Adrenal gland (tissue), 19 donors: ENCODE measurements at regions of chr5 and their contacts with region 1.

Region 1: DNA sequence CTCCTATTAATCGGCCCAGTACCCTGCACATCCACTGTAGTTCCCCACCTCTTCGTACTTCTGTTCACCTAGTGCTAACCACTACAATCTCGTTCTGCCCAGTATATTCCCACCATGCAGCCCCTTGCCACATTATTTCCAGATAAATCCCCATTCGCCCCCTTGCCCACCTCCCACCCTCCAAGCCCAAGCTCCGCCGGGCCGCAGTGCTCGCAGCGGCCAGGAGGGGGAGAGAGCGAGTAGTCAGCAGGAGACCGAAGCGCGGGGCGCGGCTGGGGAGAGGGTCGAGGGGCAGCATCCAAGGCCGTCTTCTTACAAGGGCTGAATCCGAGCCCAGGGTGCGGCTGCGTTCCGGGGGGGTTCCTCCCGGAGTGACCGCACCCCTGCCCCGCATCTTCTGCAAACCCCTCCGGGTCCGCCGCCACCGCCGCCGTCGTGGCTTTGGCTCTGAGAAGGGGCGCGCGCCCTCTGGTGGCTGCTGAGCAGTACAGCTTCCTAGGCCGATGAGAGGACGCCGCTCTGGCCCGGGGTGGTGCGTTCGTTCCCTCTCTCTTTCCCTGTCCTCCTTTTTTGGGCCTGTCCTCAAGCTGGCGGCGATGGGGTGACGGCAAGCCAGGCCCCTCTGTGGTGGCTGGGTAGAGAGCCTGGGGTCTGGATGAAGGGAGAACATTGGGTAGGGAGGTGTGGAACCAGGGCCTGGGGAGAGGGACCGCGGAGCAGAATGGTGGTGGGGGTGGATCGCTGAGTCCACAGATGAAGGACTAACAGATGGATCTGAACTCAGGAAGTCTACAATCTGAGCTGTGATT is 30.0 kb upstream of the PSD2 start:
- DNase-seq: peak; percentile 64 to 82 (median 77)
- H3K4me3 ChIP-seq: peak overlapping the region in 2 of 4 donors; percentile 30 to 60
- H3K27ac ChIP-seq: no peak overlapping the region
- H3K4me1 ChIP-seq: peaks cover 0 to 4% of the 10 kb centered on the region in 2 donors
- H3K27me3 ChIP-seq: peaks cover 8% of the 10 kb centered on the region
- CTCF ChIP-seq: peak; percentile 91 to 100 (median 98)
- POLR2A ChIP-seq: peak in 1 of 2 donors; percentile 11

Region 2: GRCh38 chr5:139422307-139422893 is 343.2 kb before region 1 on chr5:
- intact Hi-C with region 1: loop called (anchors 5 to 10 kb)
- DNase-seq: peak in 6 of 7 donors; percentile 51 to 72 (median 59)
- H3K4me3 ChIP-seq: no peak overlapping the region
- H3K27ac ChIP-seq: no peak overlapping the region
- H3K4me1 ChIP-seq: peaks cover 0 to 5% of the 10 kb centered on the region in 2 donors
- H3K27me3 ChIP-seq: no peaks in the 10 kb centered on the region
- CTCF ChIP-seq: peak; percentile 47 to 91 (median 78)
- POLR2A ChIP-seq: no peak

Region 3: DNA sequence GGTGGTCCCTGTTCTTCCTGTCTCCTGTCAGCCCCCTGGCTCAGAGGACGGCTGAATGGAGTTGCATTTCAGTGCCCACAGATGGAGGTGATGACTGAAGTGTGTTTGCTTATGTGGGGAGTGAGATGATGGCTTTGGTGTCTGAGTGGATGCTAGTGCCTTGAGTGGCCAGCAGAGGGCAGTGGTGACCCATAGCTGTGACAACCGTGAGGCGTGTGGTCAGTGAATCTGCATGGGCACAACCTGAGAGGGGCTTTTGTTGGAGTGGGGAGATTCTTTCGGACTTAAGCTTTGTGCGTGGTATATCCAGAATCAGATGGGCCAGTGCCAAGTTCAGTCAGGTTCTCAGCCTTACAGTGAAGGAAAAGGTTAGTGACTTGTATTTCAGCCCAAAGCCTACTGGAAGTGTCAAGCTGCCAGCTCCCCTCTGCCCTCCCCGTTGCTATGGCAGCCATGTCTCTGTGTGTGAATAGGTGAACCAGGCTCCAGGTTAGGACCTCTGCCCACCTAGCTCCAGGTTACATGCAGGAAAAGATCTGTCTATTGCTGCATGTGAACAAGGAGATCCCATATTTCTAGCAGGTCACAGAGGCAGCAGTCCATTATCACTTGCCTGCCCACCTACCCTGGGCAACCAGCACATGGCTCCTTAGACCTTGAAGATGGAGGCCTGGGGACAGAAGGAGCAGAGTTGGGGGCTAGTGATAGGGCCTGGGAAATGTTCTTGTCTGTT is 132.2 kb before region 1 on chr5:
- intact Hi-C with region 1: loop called (anchors 2 to 5 kb)
- DNase-seq: peak; percentile 56 to 86 (median 66)
- H3K4me3 ChIP-seq: no peak overlapping the region
- H3K27ac ChIP-seq: no peak overlapping the region
- H3K4me1 ChIP-seq: peaks cover 14 to 32% of the 10 kb centered on the region in 2 donors
- H3K27me3 ChIP-seq: no peaks in the 10 kb centered on the region
- CTCF ChIP-seq: peak; percentile 94 to 99 (median 97)
- POLR2A ChIP-seq: no peak

Region 4: GRCh38 chr5:139696894-139697658 is 68.5 kb before region 1 on chr5:
- intact Hi-C with region 1: loop called (anchors 10 kb)
- DNase-seq: peak in 6 of 7 donors; percentile 29 to 78 (median 51)
- H3K4me3 ChIP-seq: peak overlapping the region in 1 of 4 donors; percentile 38
- H3K27ac ChIP-seq: peak overlapping the region in 2 of 5 donors; percentile 77 to 81
- H3K4me1 ChIP-seq: peaks cover 3 to 30% of the 10 kb centered on the region in 2 donors
- H3K27me3 ChIP-seq: no peaks in the 10 kb centered on the region
- CTCF ChIP-seq: no peak
- POLR2A ChIP-seq: no peak

Region 5: DNA sequence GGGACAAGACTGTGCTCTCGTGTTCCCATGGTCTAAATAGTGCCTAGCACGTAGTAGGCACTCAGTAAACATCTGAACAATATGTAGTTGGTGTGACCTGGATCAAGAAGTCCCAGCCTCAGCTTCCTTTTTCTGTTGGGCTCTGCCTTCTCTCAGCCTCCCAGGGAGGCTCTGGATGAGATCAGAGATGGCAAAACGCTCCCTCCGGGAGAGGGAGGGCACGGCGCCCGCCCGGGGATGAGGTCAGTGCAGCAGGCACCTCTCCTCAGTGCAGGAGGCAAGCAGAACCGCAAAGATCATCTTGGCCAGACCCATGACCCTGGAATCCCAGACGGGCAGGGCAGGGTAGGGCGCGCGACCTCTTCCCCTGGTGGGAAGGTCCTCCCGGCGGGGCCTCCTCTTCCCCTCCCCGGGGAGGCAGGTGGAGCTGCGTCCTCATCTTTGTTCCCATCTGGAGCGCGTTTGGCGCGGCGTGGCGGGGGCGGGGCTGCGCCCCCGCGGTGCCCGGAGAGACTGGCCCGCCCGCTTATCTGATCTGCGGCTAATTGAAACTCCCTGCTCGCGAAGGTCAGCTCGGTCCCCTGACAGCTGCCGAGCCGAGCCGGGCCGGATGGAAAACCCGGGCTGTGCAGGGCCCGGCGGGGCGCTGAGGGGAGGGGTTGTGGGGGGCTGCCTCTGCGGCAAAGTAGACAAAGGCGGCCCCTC is 56.6 kb before region 1 on chr5:
- intact Hi-C with region 1: loop called in 1 of 2 experiments (anchors 10 kb)
- DNase-seq: peak; percentile 85 to 93 (median 89)
- H3K4me3 ChIP-seq: peak overlapping the region in 2 of 4 donors; percentile 9 to 22
- H3K27ac ChIP-seq: peak overlapping the region in 3 of 5 donors; percentile 7 to 67 (median 64)
- H3K4me1 ChIP-seq: peaks cover 23 to 40% of the 10 kb centered on the region in 2 donors
- H3K27me3 ChIP-seq: no peaks in the 10 kb centered on the region
- CTCF ChIP-seq: no peak
- POLR2A ChIP-seq: peak in 1 of 2 donors; percentile 39